ENCODE measurements at regions of chr20 and their contacts with region 1.

Region 1: GRCh38 chr20:18001131-18001921 is 32.5 kb downstream of the MGME1 start:
- DNase-seq: peak; percentile 70 to 77
- H3K4me3 ChIP-seq: no peak overlapping the region
- H3K4me3 Mint-ChIP-seq: no peak overlapping the region
- H3K27ac Mint-ChIP-seq: peak overlapping the region; percentile 76
- H3K4me1 ChIP-seq: peaks cover 40% of the 10 kb centered on the region
- H3K4me1 Mint-ChIP-seq: peaks cover 17% of the 10 kb centered on the region
- H3K27me3 ChIP-seq: no peaks in the 10 kb centered on the region
- H3K27me3 Mint-ChIP-seq: no peaks in the 10 kb centered on the region
- CTCF ChIP-seq: no peak

Region 2: GRCh38 chr20:17985388-17986018 is 15.8 kb before region 1 on chr20:
- CTCF ChIA-PET with region 1: no interaction called
- POLR2A ChIA-PET with region 1: no interaction called
- intact Hi-C with region 1: loop called (anchors 2 kb)
- DNase-seq: peak; percentile 51 to 74
- H3K4me3 ChIP-seq: no peak overlapping the region
- H3K4me3 Mint-ChIP-seq: no peak overlapping the region
- H3K27ac Mint-ChIP-seq: no peak overlapping the region
- H3K4me1 ChIP-seq: peaks cover 15% of the 10 kb centered on the region
- H3K4me1 Mint-ChIP-seq: peaks cover 6% of the 10 kb centered on the region
- H3K27me3 ChIP-seq: no peaks in the 10 kb centered on the region
- H3K27me3 Mint-ChIP-seq: no peaks in the 10 kb centered on the region
- CTCF ChIP-seq: no peak

Region 3: GRCh38 chr20:18066421-18067336 is 65.4 kb after region 1 on chr20:
- CTCF ChIA-PET with region 1: no interaction called
- POLR2A ChIA-PET with region 1: no interaction called
- intact Hi-C with region 1: no loop called
- DNase-seq: peak in 1 of 2 experiments; percentile 43
- H3K4me3 ChIP-seq: no peak overlapping the region
- H3K4me3 Mint-ChIP-seq: no peak overlapping the region
- H3K27ac Mint-ChIP-seq: no peak overlapping the region
- H3K4me1 ChIP-seq: peaks cover 6% of the 10 kb centered on the region; the same call in 1 of the 2 replicates
- H3K4me1 Mint-ChIP-seq: no peaks in the 10 kb centered on the region
- H3K27me3 ChIP-seq: no peaks in the 10 kb centered on the region
- H3K27me3 Mint-ChIP-seq: no peaks in the 10 kb centered on the region
- CTCF ChIP-seq: peak; percentile 29 to 42

Region 4: GRCh38 chr20:18360635-18361034 is 359.3 kb after region 1 on chr20:
- CTCF ChIA-PET with region 1: no interaction called
- POLR2A ChIA-PET with region 1: no interaction called
- intact Hi-C with region 1: no loop called
- DNase-seq: no peak
- H3K4me3 ChIP-seq: no peak overlapping the region
- H3K4me3 Mint-ChIP-seq: no peak overlapping the region
- H3K27ac Mint-ChIP-seq: no peak overlapping the region
- H3K4me1 ChIP-seq: no peaks in the 10 kb centered on the region
- H3K4me1 Mint-ChIP-seq: peaks cover 7% of the 10 kb centered on the region
- H3K27me3 ChIP-seq: no peaks in the 10 kb centered on the region
- H3K27me3 Mint-ChIP-seq: no peaks in the 10 kb centered on the region
- CTCF ChIP-seq: no peak

Measured in Caco-2 (cell line).